IMR-90 (cell line): ENCODE measurements at regions of chr22 and their contacts with region 1.

Region 1: DNA sequence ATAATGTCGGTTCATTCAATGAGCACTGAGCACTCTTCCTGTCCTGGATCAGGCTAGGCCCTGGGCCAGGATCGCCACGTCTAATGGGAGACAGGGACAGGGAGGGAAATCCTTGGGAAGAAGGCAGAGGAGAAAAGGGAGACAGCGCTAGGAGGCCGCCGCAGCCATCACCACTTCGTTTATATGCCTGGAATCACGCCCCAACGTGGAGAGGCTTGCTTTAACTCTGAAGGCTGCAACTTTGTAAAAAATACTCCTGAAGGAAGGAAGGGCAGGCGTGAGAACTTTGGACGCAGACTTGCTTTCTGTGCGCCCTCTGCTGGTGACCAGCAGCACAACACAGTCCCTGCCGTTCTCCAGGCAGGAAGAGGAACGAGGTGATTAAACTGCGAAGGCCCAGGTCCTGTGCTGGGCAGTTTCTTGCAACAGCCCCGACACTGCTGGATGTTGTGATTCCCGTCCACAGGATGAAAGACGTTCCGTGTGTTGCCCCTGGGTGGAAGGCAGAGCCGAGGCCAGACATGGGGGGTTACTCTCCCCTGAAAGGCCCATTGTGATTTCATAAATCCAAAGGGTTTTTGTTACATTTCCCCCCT is 22.1 kb downstream of the RIBC2 start:
- DNase-seq: peak; percentile 90
- ATAC-seq: peak; percentile 96
- H3K4me3 ChIP-seq: no peak overlapping the region
- H3K27ac ChIP-seq: peak overlapping the region; percentile 8; the same call in 1 of the 2 replicates
- H3K4me1 ChIP-seq: 0 out of 2 replicates have a peak, but pooled peaks cover 2% of the 10 kb centered on the region
- H3K27me3 ChIP-seq: no peaks in the 10 kb centered on the region
- CTCF ChIP-seq: peak; percentile 95
- POLR2A ChIP-seq: 0 out of 2 replicates have a peak, but pooled peaks have one; percentile 35
- RAD21 ChIP-seq: peak; percentile 88

Region 2: DNA sequence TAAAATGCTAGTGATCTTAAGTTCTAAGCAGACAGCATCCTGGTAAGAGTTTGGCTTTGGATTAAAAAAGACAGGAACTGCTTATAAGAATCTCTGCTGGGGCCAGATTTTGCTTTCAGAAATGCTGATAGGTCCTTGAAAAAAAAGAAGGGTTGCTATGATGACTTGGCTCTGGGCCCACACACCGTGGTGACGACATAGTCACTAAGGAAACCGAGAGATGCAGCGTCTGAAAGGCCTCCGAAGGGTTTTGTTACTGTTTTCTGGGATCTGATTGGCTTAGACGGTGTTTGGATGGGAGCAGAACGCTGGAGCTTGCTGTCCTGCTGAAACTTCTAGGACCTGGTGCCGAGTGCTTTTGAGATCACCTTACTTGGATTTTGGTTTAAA is 117.5 kb before region 1 on chr22:
- CTCF ChIA-PET with region 1: no interaction called
- POLR2A ChIA-PET with region 1: no interaction called
- dilution Hi-C with region 1: no loop called
- in situ Hi-C with region 1: no loop called
- intact Hi-C with region 1: loop called (anchors 1 kb)
- DNase-seq: peak; percentile 97
- ATAC-seq: peak; percentile 79
- H3K4me3 ChIP-seq: peak overlapping the region; percentile 10; the same call in 1 of the 2 replicates
- H3K27ac ChIP-seq: peak overlapping the region; percentile 75
- H3K4me1 ChIP-seq: peaks cover 22% of the 10 kb centered on the region
- H3K27me3 ChIP-seq: no peaks in the 10 kb centered on the region
- CTCF ChIP-seq: no peak
- POLR2A ChIP-seq: 0 out of 2 replicates have a peak, but pooled peaks have one; percentile 10
- RAD21 ChIP-seq: no peak

Region 3: GRCh38 chr22:45516923-45517675 is 81.5 kb after region 1 on chr22:
- CTCF ChIA-PET with region 1: no interaction called
- POLR2A ChIA-PET with region 1: no interaction called
- dilution Hi-C with region 1: no loop called
- in situ Hi-C with region 1: no loop called
- intact Hi-C with region 1: no loop called
- DNase-seq: peak; percentile 62
- ATAC-seq: peak; percentile 50
- H3K4me3 ChIP-seq: no peak overlapping the region
- H3K27ac ChIP-seq: no peak overlapping the region
- H3K4me1 ChIP-seq: peaks cover 28% of the 10 kb centered on the region
- H3K27me3 ChIP-seq: no peaks in the 10 kb centered on the region
- CTCF ChIP-seq: no peak
- POLR2A ChIP-seq: no peak
- RAD21 ChIP-seq: no peak